Colonic mucosa (tissue), 4 donors: ENCODE measurements at regions of chr7 and their contacts with region 1.

Region 1: GRCh38 chr7:92621026-92621540 is 30.9 kb upstream of the FAM133B start:
- DNase-seq: peak; percentile 77
- H3K4me3 ChIP-seq: no peak overlapping the region
- H3K27ac ChIP-seq: peak overlapping the region; percentile 2
- H3K4me1 ChIP-seq: no peaks in the 10 kb centered on the region
- H3K27me3 ChIP-seq: no peaks in the 10 kb centered on the region
- CTCF ChIP-seq: peak; percentile 64

Region 2: DNA sequence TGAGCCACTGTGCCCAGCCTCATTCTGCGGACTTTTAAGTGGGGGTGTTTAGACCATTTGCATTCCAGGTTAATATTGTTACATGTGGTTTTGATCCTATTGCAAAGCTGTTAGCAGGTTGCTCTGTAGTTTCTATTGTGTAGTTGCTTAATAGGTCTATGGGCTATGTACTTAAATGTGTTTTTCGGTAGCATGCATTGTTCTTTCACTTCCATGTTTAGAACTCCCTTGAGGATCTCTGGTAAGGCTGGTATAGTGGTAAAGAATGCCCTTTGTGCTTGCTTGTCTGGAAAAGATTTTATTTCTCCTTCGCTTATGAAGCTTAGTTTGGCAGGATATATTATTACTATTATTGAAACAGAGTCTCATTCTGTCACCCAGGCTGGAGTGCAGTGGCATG is 428.8 kb before region 1 on chr7:
- intact Hi-C with region 1: no loop called
- DNase-seq: no peak
- H3K4me3 ChIP-seq: no peak overlapping the region
- H3K27ac ChIP-seq: no peak overlapping the region
- H3K4me1 ChIP-seq: no peaks in the 10 kb centered on the region
- H3K27me3 ChIP-seq: no peaks in the 10 kb centered on the region
- CTCF ChIP-seq: no peak

Region 3: GRCh38 chr7:92833024-92833765 is 212.1 kb after region 1 on chr7:
- intact Hi-C with region 1: loop called (anchors 2 kb)
- DNase-seq: peak; percentile 94
- H3K4me3 ChIP-seq: peak overlapping the region; percentile 77
- H3K27ac ChIP-seq: peak overlapping the region; percentile 87
- H3K4me1 ChIP-seq: no peaks in the 10 kb centered on the region
- H3K27me3 ChIP-seq: no peaks in the 10 kb centered on the region
- CTCF ChIP-seq: peak; percentile 89

Region 4: DNA sequence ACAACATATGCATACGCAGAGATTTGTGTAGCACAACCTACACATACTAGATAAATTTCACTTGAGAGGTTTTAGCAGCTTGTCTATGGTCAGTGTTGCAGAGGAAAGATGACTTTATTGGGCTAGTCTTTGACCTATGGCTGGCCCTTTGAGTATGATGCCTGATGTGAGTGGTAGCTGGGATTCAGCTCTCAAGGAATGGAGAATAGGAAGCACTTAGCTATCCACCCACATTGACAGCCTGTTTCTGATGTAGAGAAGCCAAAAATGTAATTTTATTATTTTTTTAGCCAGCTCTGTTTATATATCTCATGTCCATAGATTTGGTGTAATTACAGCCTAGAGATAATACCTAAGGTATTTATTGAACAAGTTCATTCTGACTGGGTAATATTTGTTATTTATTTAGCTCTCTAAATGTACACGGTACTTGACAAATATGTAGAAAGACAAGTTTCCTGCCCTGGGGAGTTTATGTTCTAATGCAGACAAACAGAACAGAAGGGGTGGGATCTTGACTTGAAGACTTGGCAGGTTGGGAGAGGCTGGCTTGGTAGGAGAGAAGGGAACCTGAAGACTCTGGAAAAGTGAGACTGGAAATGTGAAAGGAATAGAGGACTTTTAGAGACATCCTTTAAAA is 312.8 kb after region 1 on chr7:
- intact Hi-C with region 1: no loop called
- DNase-seq: no peak
- H3K4me3 ChIP-seq: no peak overlapping the region
- H3K27ac ChIP-seq: no peak overlapping the region
- H3K4me1 ChIP-seq: no peaks in the 10 kb centered on the region
- H3K27me3 ChIP-seq: no peaks in the 10 kb centered on the region
- CTCF ChIP-seq: no peak

Region 5: DNA sequence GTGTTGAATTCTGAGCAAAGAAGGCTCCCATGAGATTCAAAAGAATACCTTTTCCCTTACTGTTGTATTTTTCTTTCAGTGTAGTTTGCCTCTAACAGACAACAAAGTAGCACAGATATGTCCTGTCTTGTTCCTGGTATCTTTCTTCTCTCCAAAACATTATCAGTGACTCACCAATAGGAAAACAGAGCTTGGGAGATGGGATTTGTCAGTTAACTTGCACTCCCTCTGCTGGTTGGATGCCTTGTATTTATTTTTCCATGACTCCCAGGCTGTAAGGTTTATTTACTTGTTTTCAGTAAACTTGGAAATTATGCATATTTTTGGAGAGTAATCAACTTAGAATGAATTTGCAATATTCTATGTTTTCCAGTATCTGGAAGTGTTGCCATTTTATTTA is 367.0 kb after region 1 on chr7:
- intact Hi-C with region 1: loop called (anchors 10 kb)
- DNase-seq: no peak
- H3K4me3 ChIP-seq: no peak overlapping the region
- H3K27ac ChIP-seq: no peak overlapping the region
- H3K4me1 ChIP-seq: no peaks in the 10 kb centered on the region
- H3K27me3 ChIP-seq: no peaks in the 10 kb centered on the region
- CTCF ChIP-seq: peak; percentile 15